PC-3 (cell line): ENCODE measurements at regions of chr4 and their contacts with region 1.

Region 1: DNA sequence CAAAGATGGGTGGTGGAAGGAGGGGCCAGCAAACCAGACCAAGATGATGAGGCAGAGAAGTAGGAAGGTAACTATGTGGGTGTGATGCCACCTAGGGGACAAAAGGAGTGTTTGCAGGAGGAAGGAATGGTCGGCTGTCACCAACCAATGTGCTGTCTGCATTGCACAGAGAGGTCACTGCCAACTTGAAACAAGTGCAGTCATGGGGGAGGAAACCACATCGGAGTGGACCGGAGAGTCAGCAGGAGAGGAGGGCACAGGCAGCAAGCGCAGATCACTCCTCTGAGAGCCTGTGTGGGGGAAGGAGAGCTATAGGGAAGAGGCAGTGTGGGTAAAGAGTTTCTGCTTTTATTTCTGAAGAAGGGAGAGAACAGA is 38.5 kb upstream of the FGFBP2 start:
- DNase-seq: peak; percentile 75
- ATAC-seq: peak; percentile 95
- H3K4me3 ChIP-seq: no peak overlapping the region
- H3K27ac ChIP-seq: no peak overlapping the region
- H3K4me1 ChIP-seq: no peaks in the 10 kb centered on the region
- H3K27me3 ChIP-seq: no peaks in the 10 kb centered on the region
- CTCF ChIP-seq: peak; percentile 83

Region 2: GRCh38 chr4:15479089-15479912 is 522.2 kb before region 1 on chr4:
- CTCF ChIA-PET with region 1: no interaction called
- POLR2A ChIA-PET with region 1: no interaction called
- intact Hi-C with region 1: loop called (anchors 10 kb)
- DNase-seq: peak; percentile 81
- ATAC-seq: peak; percentile 83
- H3K4me3 ChIP-seq: peak overlapping the region; percentile 75
- H3K27ac ChIP-seq: peak overlapping the region; percentile 76
- H3K4me1 ChIP-seq: peaks cover 8% of the 10 kb centered on the region; the same call in 1 of the 2 replicates
- H3K27me3 ChIP-seq: no peaks in the 10 kb centered on the region
- CTCF ChIP-seq: peak; percentile 75

Region 3: GRCh38 chr4:15963001-15963451 is 38.4 kb before region 1 on chr4 and contains the start of gene FGFBP2:
- CTCF ChIA-PET with region 1: no interaction called
- POLR2A ChIA-PET with region 1: interaction called, 3 read pairs
- intact Hi-C with region 1: loop called (anchors 1 kb)
- DNase-seq: peak; percentile 56
- ATAC-seq: peak; percentile 87
- H3K4me3 ChIP-seq: no peak within 1 kb of the TSS
- H3K27ac ChIP-seq: no peak within 1 kb of the TSS
- H3K4me1 ChIP-seq: no peaks in the 10 kb centered on the region
- H3K27me3 ChIP-seq: no peaks in the 10 kb centered on the region
- CTCF ChIP-seq: peak; percentile 66
- total RNA-seq, gene FGFBP2: not detected in 2 replicates

Region 4: GRCh38 chr4:15982842-15983524 is 18.5 kb before region 1 on chr4:
- CTCF ChIA-PET with region 1: no interaction called
- POLR2A ChIA-PET with region 1: no interaction called
- intact Hi-C with region 1: no loop called
- DNase-seq: peak; percentile 11
- ATAC-seq: no peak
- H3K4me3 ChIP-seq: no peak overlapping the region
- H3K27ac ChIP-seq: no peak overlapping the region
- H3K4me1 ChIP-seq: no peaks in the 10 kb centered on the region
- H3K27me3 ChIP-seq: no peaks in the 10 kb centered on the region; the same call in 1 of the 2 replicates
- CTCF ChIP-seq: no peak

Region 5: GRCh38 chr4:16667464-16667863 is 666.0 kb after region 1 on chr4:
- CTCF ChIA-PET with region 1: no interaction called
- POLR2A ChIA-PET with region 1: no interaction called
- intact Hi-C with region 1: no loop called
- DNase-seq: peak; percentile 71
- ATAC-seq: no peak; the same call in 1 of the 2 replicates
- H3K4me3 ChIP-seq: no peak overlapping the region
- H3K27ac ChIP-seq: no peak overlapping the region
- H3K4me1 ChIP-seq: 0 out of 2 replicates have a peak, but pooled peaks cover 7% of the 10 kb centered on the region
- H3K27me3 ChIP-seq: peaks cover 29% of the 10 kb centered on the region
- CTCF ChIP-seq: no peak